ENCODE measurements at regions of chr4 and their contacts with region 1.

Region 1: GRCh38 chr4:8117278-8117682 is 41.3 kb downstream of the ABLIM2 start:
- DNase-seq: peak; percentile 80
- H3K4me3 ChIP-seq: no peak overlapping the region
- H3K27ac ChIP-seq: no peak overlapping the region
- H3K4me1 ChIP-seq: no peaks in the 10 kb centered on the region
- H3K27me3 ChIP-seq: no peaks in the 10 kb centered on the region
- CTCF ChIP-seq: no peak

Region 2: DNA sequence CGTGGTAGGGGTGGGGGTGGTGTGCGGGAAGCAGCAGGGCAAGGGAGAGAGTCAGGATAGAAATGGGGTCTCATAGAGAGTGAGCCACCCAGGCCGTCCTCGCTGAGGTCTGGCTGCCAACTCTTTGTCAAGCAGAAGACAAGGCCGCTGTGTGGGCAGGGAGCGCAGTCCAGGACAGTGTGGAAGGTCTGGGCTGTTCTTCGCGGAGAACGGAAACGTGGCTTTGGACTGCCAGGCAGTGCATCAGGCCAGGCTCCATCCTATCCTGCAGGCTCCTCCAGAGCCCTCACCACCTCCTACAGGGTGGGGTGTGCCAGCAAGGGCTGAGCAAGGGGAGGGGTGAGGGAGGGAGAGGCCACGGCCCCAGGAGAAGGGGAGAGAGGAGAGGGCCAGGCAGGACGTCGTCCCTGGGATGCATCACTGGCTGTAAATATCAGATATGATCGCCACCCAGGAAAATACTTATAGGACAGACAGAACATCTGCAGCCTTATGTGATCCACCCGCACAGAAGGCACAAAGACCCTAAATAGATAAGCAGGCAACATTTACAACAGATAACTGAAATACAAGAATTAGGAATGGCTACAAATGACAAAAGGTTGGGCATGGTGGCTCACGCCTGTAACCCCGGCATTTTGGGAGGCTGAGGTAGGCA is 43.9 kb before region 1 on chr4:
- CTCF ChIA-PET with region 1: no interaction called
- POLR2A ChIA-PET with region 1: interaction called, 17 read pairs
- intact Hi-C with region 1: no loop called
- DNase-seq: peak; percentile 58
- H3K4me3 ChIP-seq: no peak overlapping the region
- H3K27ac ChIP-seq: no peak overlapping the region
- H3K4me1 ChIP-seq: peaks cover 41% of the 10 kb centered on the region
- H3K27me3 ChIP-seq: no peaks in the 10 kb centered on the region
- CTCF ChIP-seq: no peak